ENCODE measurements at regions of chr19 and their contacts with region 1.

Region 1: DNA sequence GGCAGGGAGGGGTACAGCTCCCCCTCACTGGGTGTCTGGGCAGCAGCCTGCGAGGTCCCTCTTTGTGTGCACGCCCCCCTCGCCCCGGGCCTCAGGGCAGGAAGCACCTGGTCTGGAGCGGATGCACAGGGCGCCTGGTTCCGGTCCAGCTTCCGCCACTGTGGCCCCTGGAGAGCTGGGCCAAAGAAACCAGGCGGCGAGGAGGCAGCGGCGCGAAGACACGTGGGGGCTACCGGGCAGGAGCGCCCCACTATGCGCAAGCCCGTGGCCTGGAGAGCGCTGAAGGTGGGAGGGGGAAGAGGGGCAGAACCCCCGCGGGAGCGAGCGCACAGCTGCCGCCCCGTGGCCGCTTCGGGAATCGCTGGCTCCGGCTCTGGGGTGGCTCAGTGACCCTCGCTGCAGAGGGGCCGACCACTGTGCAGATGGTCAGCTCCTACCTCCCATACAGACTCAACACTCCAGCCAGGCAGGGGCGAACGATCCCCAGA is 1.7 kb upstream of the LYL1 start:
- DNase-seq: peak; percentile 86
- ATAC-seq: peak; percentile 56
- H3K4me3 Mint-ChIP-seq: peak overlapping the region; percentile 88
- H3K27ac Mint-ChIP-seq: peak overlapping the region; percentile 98
- H3K4me1 Mint-ChIP-seq: peaks cover 69% of the 10 kb centered on the region
- H3K27me3 Mint-ChIP-seq: no peaks in the 10 kb centered on the region
- CTCF ChIP-seq: peak; percentile 86

Region 2: DNA sequence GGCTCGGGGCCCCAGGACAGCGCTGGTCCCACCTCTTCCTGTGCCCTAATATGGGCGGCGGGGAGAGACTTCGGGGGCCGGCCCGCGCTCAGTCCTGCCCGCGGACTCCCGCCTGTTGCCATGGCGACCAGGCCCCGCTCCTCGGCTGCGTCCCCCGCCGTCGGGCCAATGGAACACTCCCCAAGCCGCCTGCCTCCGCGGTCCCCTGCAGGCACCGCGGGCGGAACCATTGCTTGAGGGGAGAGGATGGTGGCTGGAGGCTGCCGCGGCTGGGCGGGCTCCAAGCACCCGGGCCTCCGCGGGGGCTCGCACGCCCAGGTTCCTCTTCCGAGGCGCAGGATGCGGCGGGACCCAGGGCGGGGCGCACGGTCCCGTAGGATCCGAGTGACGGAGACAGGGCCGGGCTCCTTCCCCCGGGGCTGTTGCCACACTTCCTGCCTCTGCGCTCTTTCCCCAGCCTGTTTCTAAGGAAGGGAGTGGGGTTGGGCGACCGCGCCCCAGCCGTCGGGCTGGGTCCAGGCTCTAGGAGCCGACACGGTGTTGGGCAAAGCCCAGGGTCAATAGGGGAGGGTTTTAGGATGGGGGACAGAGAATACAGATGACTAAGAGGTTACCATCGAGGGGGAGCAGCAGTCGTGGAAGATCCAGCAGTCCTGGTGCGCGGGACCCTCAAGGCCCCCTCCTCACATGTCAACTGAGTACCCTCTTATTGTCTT is 314.3 kb before region 1 on chr19:
- CTCF ChIA-PET with region 1: no interaction called
- POLR2A ChIA-PET with region 1: interaction called, 7 read pairs
- intact Hi-C with region 1: loop called (anchors 5 kb)
- DNase-seq: peak; percentile 95
- ATAC-seq: peak; percentile 43
- H3K4me3 Mint-ChIP-seq: peak overlapping the region; percentile 96
- H3K27ac Mint-ChIP-seq: peak overlapping the region; percentile 97
- H3K4me1 Mint-ChIP-seq: peaks cover 52% of the 10 kb centered on the region
- H3K27me3 Mint-ChIP-seq: no peaks in the 10 kb centered on the region
- CTCF ChIP-seq: no peak

Region 3: GRCh38 chr19:13022859-13023636 is 81.4 kb before region 1 on chr19:
- CTCF ChIA-PET with region 1: no interaction called
- POLR2A ChIA-PET with region 1: interaction called, 11 read pairs
- intact Hi-C with region 1: no loop called
- DNase-seq: no peak
- ATAC-seq: peak; percentile 34
- H3K4me3 Mint-ChIP-seq: peak overlapping the region; percentile 80
- H3K27ac Mint-ChIP-seq: no peak overlapping the region
- H3K4me1 Mint-ChIP-seq: peaks cover 30% of the 10 kb centered on the region
- H3K27me3 Mint-ChIP-seq: peaks cover 29% of the 10 kb centered on the region
- CTCF ChIP-seq: no peak

Region 4: GRCh38 chr19:13155472-13156359 is 51.3 kb after region 1 on chr19:
- CTCF ChIA-PET with region 1: interaction called, 6 read pairs
- POLR2A ChIA-PET with region 1: interaction called, 101 read pairs
- intact Hi-C with region 1: loop called (anchors 1 kb)
- DNase-seq: peak; percentile 94
- ATAC-seq: peak; percentile 46
- H3K4me3 Mint-ChIP-seq: peak overlapping the region; percentile 99
- H3K27ac Mint-ChIP-seq: peak overlapping the region; percentile 97
- H3K4me1 Mint-ChIP-seq: peaks cover 61% of the 10 kb centered on the region
- H3K27me3 Mint-ChIP-seq: no peaks in the 10 kb centered on the region
- CTCF ChIP-seq: no peak

Region 5: DNA sequence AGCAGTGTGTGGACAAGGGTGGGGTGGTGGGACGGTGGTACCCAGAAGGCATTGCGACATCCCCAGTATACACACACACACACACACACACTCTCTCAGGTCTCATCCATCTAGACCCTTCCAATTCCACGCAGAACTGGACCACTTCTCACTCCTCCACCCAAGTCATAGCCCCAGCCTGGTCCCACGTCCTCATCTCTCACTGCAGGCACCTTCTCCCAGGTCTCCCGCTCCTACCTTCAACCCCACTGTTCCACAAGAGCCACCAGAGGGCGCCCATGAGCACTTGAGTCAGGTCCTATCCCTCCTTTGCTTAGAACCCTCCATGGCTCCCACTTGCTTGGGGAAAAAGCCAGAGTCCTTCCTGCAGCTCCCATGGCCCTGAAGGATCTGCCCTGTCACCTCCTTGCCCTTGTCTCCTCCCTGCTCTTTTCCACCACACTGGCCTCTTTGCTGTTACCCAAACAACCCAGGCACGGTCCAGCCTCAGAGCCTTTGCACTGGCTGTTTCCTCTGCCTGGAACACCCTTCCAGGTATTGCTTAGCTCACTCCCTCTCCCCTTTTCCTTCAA is 108.4 kb after region 1 on chr19:
- CTCF ChIA-PET with region 1: no interaction called
- POLR2A ChIA-PET with region 1: interaction called, 10 read pairs
- intact Hi-C with region 1: loop called (anchors 2 kb)
- DNase-seq: peak; percentile 60
- ATAC-seq: no peak
- H3K4me3 Mint-ChIP-seq: no peak overlapping the region
- H3K27ac Mint-ChIP-seq: no peak overlapping the region
- H3K4me1 Mint-ChIP-seq: peaks cover 66% of the 10 kb centered on the region
- H3K27me3 Mint-ChIP-seq: no peaks in the 10 kb centered on the region
- CTCF ChIP-seq: no peak

Region 6: DNA sequence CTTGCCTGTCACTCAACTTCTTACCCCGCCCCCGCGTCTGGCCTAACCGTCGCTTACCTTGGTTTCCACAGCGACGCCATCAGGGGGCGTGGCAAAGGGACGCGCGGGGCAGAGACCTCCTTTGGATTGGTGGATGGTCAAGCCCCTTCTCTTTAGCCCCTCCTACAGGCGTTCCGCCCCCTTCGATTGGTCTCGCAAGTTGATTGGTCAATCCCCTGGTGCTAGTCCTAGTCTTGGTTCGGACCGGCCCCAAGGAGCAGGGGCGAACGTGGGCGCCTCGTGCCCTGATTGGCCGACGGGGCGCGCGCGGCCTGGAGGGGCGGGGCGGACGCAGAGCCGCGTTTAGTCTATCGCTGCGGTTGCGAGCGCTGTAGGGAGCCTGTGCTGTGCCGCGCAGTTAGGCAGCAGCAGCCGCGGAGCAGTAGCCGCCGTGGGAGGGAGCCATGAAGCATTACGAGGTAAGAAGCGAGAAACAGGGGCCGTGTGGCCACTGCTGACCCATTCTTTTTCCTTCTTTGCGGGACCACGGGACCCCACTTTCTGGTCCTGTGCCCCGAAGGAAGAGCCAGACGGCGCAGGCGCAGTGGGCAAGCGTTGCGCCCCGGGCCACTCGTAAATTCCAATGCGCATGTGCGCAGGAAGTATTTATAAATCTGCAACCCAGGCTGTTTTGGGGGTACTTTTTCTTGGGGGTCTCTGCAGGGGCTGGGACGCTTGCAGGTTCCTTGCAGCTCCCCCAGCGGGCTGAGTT is 1425.0 kb after region 1 on chr19 and contains the start of gene TECR:
- CTCF ChIA-PET with region 1: interaction called, 3 read pairs
- POLR2A ChIA-PET with region 1: no interaction called
- intact Hi-C with region 1: loop called (anchors 1 kb)
- DNase-seq: peak; percentile 99
- ATAC-seq: peak; percentile 96
- H3K4me3 Mint-ChIP-seq: peak within 1 kb of the TSS; percentile 95
- H3K27ac Mint-ChIP-seq: peak within 1 kb of the TSS; percentile 96
- H3K4me1 Mint-ChIP-seq: peaks cover 31% of the 10 kb centered on the region
- H3K27me3 Mint-ChIP-seq: no peaks in the 10 kb centered on the region
- CTCF ChIP-seq: no peak
- total RNA-seq, gene TECR: 55.3 and 58.6 TPM in 2 replicates